Ascending aorta (tissue), 2 donors: ENCODE measurements at regions of chr9 and their contacts with region 1.

Region 1: DNA sequence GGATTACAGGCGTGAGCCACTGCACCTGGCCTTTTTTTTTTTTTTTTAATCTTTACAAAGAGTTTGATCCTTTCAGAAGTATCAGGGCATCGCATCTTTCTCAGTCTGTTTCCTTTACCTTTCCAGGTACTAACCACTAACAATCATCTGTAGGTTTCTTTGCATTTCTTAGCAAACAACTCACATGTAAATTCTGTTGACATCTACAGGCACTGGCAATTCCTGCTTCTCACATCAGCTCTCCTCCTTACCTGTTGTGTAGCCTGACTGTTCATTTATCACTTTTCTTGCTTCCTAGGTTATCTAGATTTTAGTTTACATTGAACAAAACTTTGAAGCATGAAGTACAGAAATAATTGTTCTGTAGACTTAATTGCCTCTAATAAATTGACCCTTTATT is 27.5 kb upstream of the VPS13A start:
- DNase-seq: no peak
- H3K4me3 ChIP-seq: no peak overlapping the region
- H3K27ac ChIP-seq: no peak overlapping the region
- H3K4me1 ChIP-seq: no peaks in the 10 kb centered on the region
- H3K27me3 ChIP-seq: no peaks in the 10 kb centered on the region
- CTCF ChIP-seq: no peak

Region 2: DNA sequence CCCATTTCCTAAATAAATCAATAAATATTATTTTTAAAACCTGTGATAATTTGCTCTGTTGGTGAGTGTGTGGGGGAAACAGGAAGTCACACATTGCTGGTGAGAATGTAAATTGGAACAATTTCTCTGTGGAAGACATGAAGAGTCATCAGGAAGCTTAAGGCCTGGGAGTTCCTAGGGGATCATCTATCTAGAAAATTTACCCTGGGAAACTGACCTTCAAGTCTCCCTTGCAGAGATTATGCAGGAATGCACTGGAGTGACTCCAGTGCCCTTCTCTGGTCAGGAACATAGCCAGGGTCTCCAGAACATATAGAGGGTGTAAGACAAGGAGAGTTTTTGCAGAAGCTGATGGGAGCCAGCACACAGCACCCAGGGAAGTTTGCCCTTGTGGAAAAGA is 703.9 kb before region 1 on chr9:
- intact Hi-C with region 1: loop called (anchors 2 kb)
- DNase-seq: no peak
- H3K4me3 ChIP-seq: no peak overlapping the region
- H3K27ac ChIP-seq: no peak overlapping the region
- H3K4me1 ChIP-seq: no peaks in the 10 kb centered on the region
- H3K27me3 ChIP-seq: no peaks in the 10 kb centered on the region
- CTCF ChIP-seq: no peak

Region 3: GRCh38 chr9:77291714-77292113 is 141.8 kb after region 1 on chr9:
- intact Hi-C with region 1: no loop called
- DNase-seq: no peak
- H3K4me3 ChIP-seq: no peak overlapping the region
- H3K27ac ChIP-seq: no peak overlapping the region
- H3K4me1 ChIP-seq: no peaks in the 10 kb centered on the region
- H3K27me3 ChIP-seq: no peaks in the 10 kb centered on the region
- CTCF ChIP-seq: no peak